ENCODE measurements at regions of chr2 and their contacts with region 1.

Region 1: GRCh38 chr2:18520451-18521425 is 39.7 kb downstream of the RDH14 start:
- DNase-seq: peak; percentile 87 to 97
- ATAC-seq: peak; percentile 92
- H3K4me3 ChIP-seq: no peak overlapping the region
- H3K27ac ChIP-seq: peak overlapping the region; percentile 17 to 46
- H3K4me1 ChIP-seq: peaks cover 2 to 6% of the 10 kb centered on the region in 2 donors
- H3K27me3 ChIP-seq: no peaks in the 10 kb centered on the region

Region 2: GRCh38 chr2:18311420-18312195 is 209.1 kb before region 1 on chr2:
- intact Hi-C with region 1: no loop called
- DNase-seq: no peak
- ATAC-seq: peak; percentile 44
- H3K4me3 ChIP-seq: peak overlapping the region in 1 of 2 donors; percentile 34
- H3K27ac ChIP-seq: peak overlapping the region in 1 of 2 donors; percentile 63
- H3K4me1 ChIP-seq: peaks cover 2 to 4% of the 10 kb centered on the region in 2 donors
- H3K27me3 ChIP-seq: no peaks in the 10 kb centered on the region

Region 3: GRCh38 chr2:18387441-18388206 is 133.1 kb before region 1 on chr2:
- intact Hi-C with region 1: loop called in 1 of 2 experiments (anchors 5 kb)
- DNase-seq: peak; percentile 79 to 85
- ATAC-seq: peak; percentile 92
- H3K4me3 ChIP-seq: no peak overlapping the region
- H3K27ac ChIP-seq: peak overlapping the region in 1 of 2 donors; percentile 13
- H3K4me1 ChIP-seq: no peaks in the 10 kb centered on the region
- H3K27me3 ChIP-seq: no peaks in the 10 kb centered on the region

Region 4: DNA sequence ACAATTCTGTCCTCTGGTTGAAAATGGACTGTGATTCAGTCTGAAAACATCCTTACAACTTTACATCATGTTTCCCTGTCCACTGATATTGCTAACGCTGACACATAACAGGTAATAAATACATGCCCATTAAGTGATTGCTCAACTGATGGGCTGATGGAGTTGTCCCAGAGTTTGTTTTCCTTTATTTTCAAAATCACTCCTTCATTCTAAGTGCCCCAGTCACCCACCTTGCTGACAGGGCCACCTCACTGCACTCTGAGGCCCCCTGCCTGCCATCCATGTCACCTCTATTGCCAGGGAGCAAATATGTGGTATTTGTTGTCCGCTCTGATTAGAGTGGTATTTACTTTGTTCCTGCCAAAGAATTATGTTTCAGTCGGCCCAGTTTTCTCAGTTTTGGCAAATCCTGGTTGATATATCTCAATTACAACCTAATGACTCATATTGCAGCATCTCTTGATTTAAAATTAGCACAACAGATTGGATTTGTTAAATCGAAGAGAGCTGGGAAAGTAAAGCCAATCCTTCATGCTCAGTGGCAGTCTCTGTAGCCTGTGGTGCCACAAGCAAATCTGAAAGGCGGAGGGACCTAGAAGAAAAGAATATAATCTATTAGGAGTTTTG is 65.4 kb before region 1 on chr2:
- intact Hi-C with region 1: loop called (anchors 5 kb)
- DNase-seq: no peak
- ATAC-seq: peak; percentile 71
- H3K4me3 ChIP-seq: no peak overlapping the region
- H3K27ac ChIP-seq: peak overlapping the region; percentile 38 to 96
- H3K4me1 ChIP-seq: peaks cover 4 to 5% of the 10 kb centered on the region in 2 donors
- H3K27me3 ChIP-seq: no peaks in the 10 kb centered on the region

Region 5: GRCh38 chr2:18741895-18742732 is 221.4 kb after region 1 on chr2:
- intact Hi-C with region 1: loop called (anchors 2 kb)
- DNase-seq: peak; percentile 65 to 78
- ATAC-seq: peak; percentile 64
- H3K4me3 ChIP-seq: no peak overlapping the region
- H3K27ac ChIP-seq: no peak overlapping the region
- H3K4me1 ChIP-seq: no peaks in the 10 kb centered on the region
- H3K27me3 ChIP-seq: no peaks in the 10 kb centered on the region

Region 6: GRCh38 chr2:19362755-19363473 is 842.2 kb after region 1 on chr2:
- intact Hi-C with region 1: loop called (anchors 5 kb)
- DNase-seq: peak; percentile 86 to 93
- ATAC-seq: peak; percentile 79
- H3K4me3 ChIP-seq: peak overlapping the region; percentile 66 to 88
- H3K27ac ChIP-seq: no peak overlapping the region
- H3K4me1 ChIP-seq: no peaks in the 10 kb centered on the region
- H3K27me3 ChIP-seq: no peaks in the 10 kb centered on the region

Measured in aorta (tissue), 5 donors.